Activated T-helper 1 cell treated with anti-CD3 and anti-CD28 coated beads, Interleukin-12 subunit alpha, Interleukin-12 subunit beta, Interleukin-2, Interleukin-4 antibody, amounts not matched to agents 30 ng/mL and 10 ng/mL and 1 ng/mL, durations not matched to agents 14 hours and 24 hours and 36 hours (primary cell): ENCODE measurements at regions of chr1 and their contacts with region 1.

Region 1: DNA sequence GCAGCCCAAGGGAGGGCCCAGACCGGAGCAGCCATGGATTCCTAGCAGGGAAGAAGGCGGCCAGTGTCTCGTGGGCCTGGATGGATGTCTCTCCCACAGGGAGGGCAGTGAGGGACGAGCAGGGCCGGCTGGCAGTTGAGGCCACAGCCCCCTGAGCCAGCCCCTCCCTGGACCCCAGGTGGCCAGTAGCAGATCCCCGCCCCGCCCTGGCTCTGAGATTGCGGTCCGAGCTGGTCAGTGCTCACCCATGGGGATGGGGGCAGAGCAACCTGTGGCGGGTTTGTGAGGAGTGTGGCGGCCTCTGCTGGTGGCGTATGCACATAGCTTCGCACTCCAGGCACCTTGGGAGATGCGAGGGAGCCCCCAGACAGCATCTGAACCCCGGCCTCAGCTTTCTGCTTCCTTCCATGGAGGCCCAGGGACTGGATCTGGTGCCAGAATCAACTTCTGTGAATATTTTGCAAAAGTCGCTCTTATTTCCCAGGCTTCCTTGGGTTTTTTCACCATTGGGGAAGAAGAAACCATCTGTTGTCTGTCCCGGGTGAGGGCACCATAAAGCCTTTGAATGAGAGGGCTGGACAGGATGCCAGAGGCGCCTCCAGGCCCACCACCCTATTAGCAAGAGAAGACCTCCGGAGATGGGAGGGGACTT is 8.4 kb upstream of the KCNN3 start:
- DNase-seq: peak; percentile 64
- H3K4me3 Mint-ChIP-seq: no peak overlapping the region
- H3K27ac Mint-ChIP-seq: no peak overlapping the region
- H3K4me1 Mint-ChIP-seq: peaks cover 18% of the 10 kb centered on the region
- H3K27me3 Mint-ChIP-seq: peaks cover 7% of the 10 kb centered on the region

Region 2: GRCh38 chr1:154669464-154670282 is 208.8 kb before region 1 on chr1:
- intact Hi-C with region 1: loop called (anchors 1 kb)
- DNase-seq: peak; percentile 64
- H3K4me3 Mint-ChIP-seq: no peak overlapping the region
- H3K27ac Mint-ChIP-seq: no peak overlapping the region
- H3K4me1 Mint-ChIP-seq: peaks cover 17% of the 10 kb centered on the region
- H3K27me3 Mint-ChIP-seq: peaks cover 2% of the 10 kb centered on the region